ENCODE measurements at regions of chr22 and their contacts with region 1.

Region 1: DNA sequence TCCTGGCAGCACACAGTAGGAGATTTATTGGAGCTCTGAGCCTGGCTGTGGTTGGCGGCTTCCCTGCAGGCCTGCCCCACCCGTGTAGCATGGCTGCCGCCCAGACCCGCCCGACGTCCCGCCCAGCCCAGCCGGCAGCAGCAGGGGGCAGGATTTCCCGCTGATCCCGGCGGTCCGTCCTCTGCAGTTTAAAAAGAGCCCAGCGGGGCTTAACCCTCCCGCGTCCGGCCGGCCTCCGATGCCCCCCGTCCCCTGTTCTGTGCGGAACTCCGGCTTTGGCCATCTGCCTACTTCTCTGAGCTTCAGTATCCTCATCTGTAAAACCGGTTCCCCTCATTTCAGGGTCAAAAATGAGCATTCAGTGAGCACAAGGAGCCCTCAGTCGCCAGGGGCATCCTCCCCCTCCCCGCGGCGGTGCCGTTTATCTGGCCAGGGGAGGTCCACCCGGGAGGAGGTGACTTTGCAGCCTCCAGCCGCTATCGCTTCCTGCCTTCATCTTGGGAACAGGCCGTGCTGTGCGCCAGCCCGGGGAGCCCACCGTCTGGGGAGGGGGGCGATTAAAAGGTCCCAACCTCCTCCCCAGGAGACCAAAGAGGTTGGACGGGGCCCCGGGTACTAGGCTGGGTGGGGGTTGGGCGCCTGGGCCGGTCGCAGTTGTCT is at the start of gene GAS2L1:
- DNase-seq: peak; percentile 78 to 81
- H3K4me3 ChIP-seq: peak within 1 kb of the TSS; percentile 75 to 99 (median 78)
- H3K27ac ChIP-seq: peak within 1 kb of the TSS; percentile 56 to 78 (median 74)
- H3K4me1 ChIP-seq: peaks cover 7 to 47% of the 10 kb centered on the region in 2 donors
- H3K27me3 ChIP-seq: no peaks in the 10 kb centered on the region
- CTCF ChIP-seq: peak; percentile 29 to 64 (median 50)
- POLR2A ChIP-seq: no peak
- total RNA-seq, gene GAS2L1: 9.3 to 22.2 (median 15.7) TPM

Region 2: GRCh38 chr22:29251981-29252911 is 54.1 kb before region 1 on chr22:
- intact Hi-C with region 1: no loop called
- DNase-seq: no peak
- H3K4me3 ChIP-seq: no peak overlapping the region
- H3K27ac ChIP-seq: no peak overlapping the region
- H3K4me1 ChIP-seq: no peaks in the 10 kb centered on the region
- H3K27me3 ChIP-seq: no peaks in the 10 kb centered on the region
- CTCF ChIP-seq: no peak
- POLR2A ChIP-seq: no peak

Region 3: DNA sequence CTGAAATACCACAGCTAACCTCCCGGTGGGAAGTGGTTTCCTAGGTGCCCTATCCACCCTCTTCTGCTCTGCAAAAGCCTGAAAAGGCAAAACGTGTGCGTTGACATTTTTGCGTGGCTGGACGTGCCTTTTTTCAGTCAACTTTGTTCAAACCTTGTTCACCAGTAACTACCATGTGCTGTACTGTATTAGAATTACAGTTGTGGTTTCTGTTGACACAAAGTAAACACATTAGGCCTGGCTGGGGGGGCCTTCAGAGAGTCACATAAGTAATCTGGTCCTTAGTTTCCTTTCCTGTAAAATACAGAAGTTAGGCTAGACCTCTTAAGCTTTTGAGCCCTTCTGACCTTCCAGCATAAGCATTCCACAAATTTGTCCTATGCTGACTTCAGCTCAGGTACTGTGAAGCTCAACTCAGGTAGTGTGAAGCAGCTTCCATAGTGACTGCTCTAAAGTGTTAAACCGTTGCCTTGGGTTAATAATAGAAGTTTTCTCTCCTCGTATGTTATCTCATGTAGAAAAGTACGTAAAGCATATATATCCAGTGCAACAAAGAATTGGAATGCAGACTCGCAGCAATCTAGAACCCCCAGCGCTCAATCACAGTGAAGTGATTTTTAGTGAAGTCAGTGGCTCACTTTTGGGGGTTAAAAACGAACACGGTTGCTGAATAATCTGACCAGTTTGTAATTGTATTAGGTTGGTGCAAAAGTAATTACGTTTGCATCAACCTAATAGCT is 36.4 kb before region 1 on chr22:
- intact Hi-C with region 1: loop called (anchors 5 kb)
- DNase-seq: no peak
- H3K4me3 ChIP-seq: peak overlapping the region; percentile 14 to 78 (median 49)
- H3K27ac ChIP-seq: peak overlapping the region in 1 of 3 donors; percentile 98
- H3K4me1 ChIP-seq: peaks cover 35 to 44% of the 10 kb centered on the region in 2 donors
- H3K27me3 ChIP-seq: no peaks in the 10 kb centered on the region
- CTCF ChIP-seq: no peak
- POLR2A ChIP-seq: no peak

Region 4: DNA sequence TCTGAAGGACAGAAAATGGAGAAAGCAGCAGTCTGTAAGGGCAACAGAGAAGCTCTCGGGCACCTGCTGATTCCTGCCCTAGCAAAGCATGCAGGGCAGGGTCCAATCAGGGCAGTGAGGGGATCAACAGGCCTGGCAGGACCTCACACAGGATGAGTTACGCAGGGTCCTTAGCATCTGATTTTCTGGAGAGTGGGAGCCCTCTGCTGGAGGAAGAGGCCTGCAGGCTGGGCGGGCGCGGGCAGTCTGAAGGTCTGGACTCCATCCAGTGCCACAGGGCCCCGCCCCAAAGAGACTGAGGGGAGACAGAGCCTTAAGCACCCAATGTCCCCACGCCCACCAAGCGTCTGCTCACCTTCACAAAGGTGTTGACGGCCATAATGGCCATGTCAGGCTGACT is 53.2 kb after region 1 on chr22:
- intact Hi-C with region 1: no loop called
- DNase-seq: peak in 1 of 2 donors; percentile 20
- H3K4me3 ChIP-seq: no peak overlapping the region
- H3K27ac ChIP-seq: no peak overlapping the region
- H3K4me1 ChIP-seq: peaks cover 9 to 17% of the 10 kb centered on the region in 2 donors
- H3K27me3 ChIP-seq: no peaks in the 10 kb centered on the region
- CTCF ChIP-seq: peak in 2 of 6 experiments; percentile 11 to 29
- POLR2A ChIP-seq: no peak

Region 5: DNA sequence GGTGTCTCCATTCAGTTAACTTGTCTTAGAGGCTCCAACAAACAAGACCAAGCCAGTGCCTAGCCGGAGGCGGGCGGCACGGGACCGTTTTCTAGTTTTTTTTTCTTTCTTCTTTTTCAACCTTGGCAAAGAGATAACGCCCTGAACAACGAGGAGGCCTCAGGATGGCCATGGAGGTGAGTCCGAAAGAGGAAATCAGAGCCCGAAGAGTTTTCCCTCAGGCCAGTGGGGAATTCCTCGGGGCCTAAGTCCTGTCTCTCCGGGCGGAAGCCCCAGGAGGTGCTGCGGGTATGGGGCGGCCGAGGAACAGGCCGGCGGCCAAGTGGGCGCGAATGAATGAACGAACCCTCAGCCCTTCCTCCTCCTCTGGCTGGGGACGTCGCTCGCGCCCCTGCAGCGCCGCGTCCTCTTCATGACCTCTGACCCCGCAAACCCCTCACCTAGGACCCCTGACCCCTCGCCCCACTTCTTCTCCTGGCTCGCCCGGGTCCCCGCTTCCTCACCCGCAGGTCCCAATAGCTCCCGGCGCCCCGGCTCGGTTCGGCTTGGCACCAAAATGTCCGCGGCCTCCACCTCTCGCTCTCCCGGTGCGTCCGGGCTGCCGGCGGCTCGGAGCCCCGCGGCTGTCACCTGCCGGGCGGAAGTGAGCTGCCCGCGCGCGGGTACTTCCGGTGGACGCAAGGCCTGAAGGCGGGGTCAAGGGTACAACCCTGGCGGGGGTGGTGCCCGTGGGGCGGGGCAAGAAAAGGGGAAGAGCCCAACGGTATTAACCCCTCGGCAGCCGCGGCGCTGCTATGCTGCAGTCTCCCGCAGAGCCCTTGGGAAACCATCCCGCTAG is 81.8 kb after region 1 on chr22 and contains the start of gene AP1B1:
- intact Hi-C with region 1: loop called (anchors 10 kb)
- DNase-seq: peak; percentile 96 to 98
- H3K4me3 ChIP-seq: peak within 1 kb of the TSS; percentile 29 to 75 (median 29)
- H3K27ac ChIP-seq: peak within 1 kb of the TSS; percentile 55 to 63 (median 60)
- H3K4me1 ChIP-seq: peaks cover 24 to 38% of the 10 kb centered on the region in 2 donors
- H3K27me3 ChIP-seq: no peaks in the 10 kb centered on the region
- CTCF ChIP-seq: peak in 1 of 6 experiments; percentile 13
- POLR2A ChIP-seq: peak in 1 of 2 donors; percentile 71
- total RNA-seq, gene AP1B1: 45.0 to 103 (median 91.4) TPM

Measured in thyroid gland (tissue), 4 donors.